ENCODE measurements at regions of chr12 and their contacts with region 1.

Region 1: GRCh38 chr12:4203772-4204376 is 69.7 kb upstream of the CCND2 start:
- DNase-seq: no peak
- CTCF ChIP-seq: no peak

Region 2: DNA sequence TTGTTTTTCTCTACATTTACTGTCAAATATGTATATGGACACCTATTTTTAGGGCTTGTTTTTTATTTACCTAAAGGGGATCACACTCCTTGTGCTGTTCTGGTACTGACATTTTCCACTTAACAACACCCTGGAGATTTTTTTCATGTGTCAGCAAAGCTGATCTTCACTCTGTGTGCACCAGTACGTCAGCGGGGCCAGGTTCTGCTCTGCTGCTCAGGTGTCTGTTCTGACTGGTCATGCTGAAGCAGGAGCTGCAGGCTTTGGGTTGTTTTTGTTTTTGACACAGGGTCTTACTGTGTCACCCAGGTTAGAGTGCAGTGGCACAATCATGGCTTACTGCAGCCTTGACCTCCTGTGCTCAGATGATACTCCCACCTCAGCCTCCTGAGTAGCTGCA is 12.2 kb before region 1 on chr12:
- CTCF ChIA-PET with region 1: interaction called, 11 read pairs
- POLR2A ChIA-PET with region 1: no interaction called
- DNase-seq: peak; percentile 42
- CTCF ChIP-seq: no peak

Measured in GM10248 (cell line).